Prostate gland (tissue), 2 donors: ENCODE measurements at regions of chr13 and their contacts with region 1.

Region 1: GRCh38 chr13:30408319-30409101 is 13.8 kb upstream of the UBE2L5 start:
- DNase-seq: peak; percentile 94
- H3K4me3 ChIP-seq: peak overlapping the region; percentile 15 to 29
- H3K27ac ChIP-seq: peak overlapping the region; percentile 87 to 90
- H3K4me1 ChIP-seq: peaks cover 7% of the 10 kb centered on the region
- H3K27me3 ChIP-seq: no peaks in the 10 kb centered on the region
- CTCF ChIP-seq: peak; percentile 84 to 98 (median 88)
- POLR2A ChIP-seq: peak; percentile 29

Region 2: GRCh38 chr13:29850224-29850898 is 558.1 kb before region 1 on chr13 and contains the start of gene UBL3:
- intact Hi-C with region 1: no loop called
- DNase-seq: peak; percentile 98
- H3K4me3 ChIP-seq: peak within 1 kb of the TSS; percentile 67 to 68
- H3K27ac ChIP-seq: peak within 1 kb of the TSS; percentile 97 to 99
- H3K4me1 ChIP-seq: no peaks in the 10 kb centered on the region
- H3K27me3 ChIP-seq: no peaks in the 10 kb centered on the region
- CTCF ChIP-seq: no peak
- POLR2A ChIP-seq: peak; percentile 94
- total RNA-seq, gene UBL3: 36.3 to 38.2 TPM

Region 3: DNA sequence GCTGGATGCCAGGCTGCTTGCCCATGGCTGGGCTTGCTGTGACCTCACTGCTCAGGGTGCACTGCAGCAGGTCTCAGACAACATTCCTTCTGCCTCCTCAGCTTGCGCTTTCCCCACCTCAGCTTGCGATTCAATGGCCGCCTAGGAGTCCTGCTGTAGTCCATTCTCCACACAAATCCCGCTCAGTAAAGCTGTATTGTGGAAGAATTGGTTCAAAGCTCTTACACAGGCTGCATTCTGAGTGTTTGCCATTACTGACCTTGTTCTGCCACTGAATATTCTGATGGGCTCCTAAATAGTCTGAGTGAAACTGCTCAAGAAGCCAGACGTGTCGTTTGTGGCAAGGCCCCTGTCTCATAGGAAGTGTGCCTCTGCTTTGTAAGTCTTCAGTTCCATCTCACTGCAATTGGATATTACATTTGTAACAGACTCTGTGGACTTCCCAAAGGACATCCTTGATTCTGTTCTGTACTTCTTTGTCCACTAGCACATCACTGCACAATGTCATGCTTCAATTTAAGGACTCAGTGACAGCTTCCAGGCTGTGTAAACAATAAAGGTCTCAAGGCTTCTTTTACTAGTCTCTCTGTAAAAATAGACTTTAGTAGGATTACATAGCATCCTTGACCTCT is 150.9 kb before region 1 on chr13:
- intact Hi-C with region 1: loop called (anchors 10 kb)
- DNase-seq: no peak
- H3K4me3 ChIP-seq: no peak overlapping the region
- H3K27ac ChIP-seq: peak overlapping the region; percentile 27 to 29
- H3K4me1 ChIP-seq: peaks cover 4% of the 10 kb centered on the region
- H3K27me3 ChIP-seq: no peaks in the 10 kb centered on the region
- CTCF ChIP-seq: no peak
- POLR2A ChIP-seq: no peak

Region 4: DNA sequence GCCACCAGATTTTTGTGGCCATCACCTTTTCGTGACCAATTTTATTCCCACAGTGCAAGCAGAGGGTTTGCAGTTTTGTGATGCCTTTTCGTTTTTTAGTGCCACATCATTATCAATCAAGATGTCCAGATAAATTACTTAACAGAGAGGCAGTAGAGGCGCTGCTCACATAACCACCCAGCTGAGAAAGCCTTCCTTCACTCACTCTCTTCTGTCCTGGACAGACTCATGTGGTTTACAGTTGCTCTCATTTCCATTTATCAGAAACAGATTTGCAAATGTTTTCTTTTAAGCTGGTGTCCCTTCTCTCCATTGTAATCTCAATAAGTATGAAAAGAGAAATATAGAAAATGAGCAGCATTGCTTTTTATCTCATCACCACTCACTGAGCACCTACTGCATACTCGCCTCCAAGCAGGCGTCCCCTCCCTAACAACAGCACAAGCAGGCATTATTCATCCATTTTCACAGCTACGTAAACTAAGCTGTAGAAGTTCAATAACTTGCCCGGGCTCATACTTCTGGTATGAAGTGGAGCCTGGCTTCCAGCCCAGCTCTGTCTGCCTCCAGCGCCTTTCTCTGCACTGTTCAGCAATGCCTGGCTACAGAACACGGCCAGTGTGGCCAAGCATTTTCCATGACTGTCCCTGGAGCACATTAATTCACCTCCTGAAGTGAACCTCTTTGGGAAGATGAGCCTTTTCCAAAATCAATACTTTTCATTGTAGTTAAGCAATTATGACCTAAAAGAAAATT is 66.5 kb before region 1 on chr13:
- intact Hi-C with region 1: loop called (anchors 5 kb)
- DNase-seq: peak; percentile 91
- H3K4me3 ChIP-seq: no peak overlapping the region
- H3K27ac ChIP-seq: peak overlapping the region; percentile 30 to 39
- H3K4me1 ChIP-seq: peaks cover 12% of the 10 kb centered on the region
- H3K27me3 ChIP-seq: no peaks in the 10 kb centered on the region
- CTCF ChIP-seq: no peak
- POLR2A ChIP-seq: no peak

Region 5: GRCh38 chr13:30422054-30422839 is 13.7 kb after region 1 on chr13 and contains the start of gene UBE2L5:
- intact Hi-C with region 1: loop called (anchors 2 kb)
- DNase-seq: peak; percentile 82
- H3K4me3 ChIP-seq: peak within 1 kb of the TSS; percentile 41 to 54
- H3K27ac ChIP-seq: peak within 1 kb of the TSS; percentile 96 to 98
- H3K4me1 ChIP-seq: no peaks in the 10 kb centered on the region
- H3K27me3 ChIP-seq: no peaks in the 10 kb centered on the region
- CTCF ChIP-seq: no peak
- POLR2A ChIP-seq: peak; percentile 79
- total RNA-seq, gene UBE2L5: 0.18 to 5.2 TPM

Region 6: GRCh38 chr13:30572859-30573275 is 164.4 kb after region 1 on chr13:
- intact Hi-C with region 1: no loop called
- DNase-seq: no peak
- H3K4me3 ChIP-seq: peak overlapping the region; percentile 14 to 18
- H3K27ac ChIP-seq: peak overlapping the region; percentile 52 to 73
- H3K4me1 ChIP-seq: no peaks in the 10 kb centered on the region
- H3K27me3 ChIP-seq: no peaks in the 10 kb centered on the region
- CTCF ChIP-seq: peak in 1 of 4 experiments; percentile 17
- POLR2A ChIP-seq: no peak